MCF 10A (cell line): ENCODE measurements at regions of chr1 and their contacts with region 1.

Region 1: GRCh38 chr1:40691538-40692428 is at the start of gene NFYC:
- DNase-seq: peak; percentile 100
- H3K4me3 Mint-ChIP-seq: peak within 1 kb of the TSS; percentile 75
- H3K27ac Mint-ChIP-seq: peak within 1 kb of the TSS; percentile 44
- H3K4me1 Mint-ChIP-seq: peaks cover 22% of the 10 kb centered on the region
- H3K27me3 Mint-ChIP-seq: no peaks in the 10 kb centered on the region
- CTCF ChIP-seq: no peak
- total RNA-seq, gene NFYC: 66.4 and 69.6 TPM in 2 replicates

Region 2: GRCh38 chr1:40633931-40634376 is 57.8 kb before region 1 on chr1:
- CTCF ChIA-PET with region 1: interaction called, 3 read pairs
- POLR2A ChIA-PET with region 1: interaction called, 10 read pairs
- intact Hi-C with region 1: no loop called
- DNase-seq: no peak
- H3K4me3 Mint-ChIP-seq: no peak overlapping the region
- H3K27ac Mint-ChIP-seq: no peak overlapping the region
- H3K4me1 Mint-ChIP-seq: peaks cover 5% of the 10 kb centered on the region
- H3K27me3 Mint-ChIP-seq: no peaks in the 10 kb centered on the region
- CTCF ChIP-seq: no peak

Region 3: GRCh38 chr1:40650075-40650474 is 41.7 kb before region 1 on chr1:
- CTCF ChIA-PET with region 1: no interaction called
- POLR2A ChIA-PET with region 1: no interaction called
- intact Hi-C with region 1: no loop called
- DNase-seq: no peak
- H3K4me3 Mint-ChIP-seq: no peak overlapping the region
- H3K27ac Mint-ChIP-seq: no peak overlapping the region
- H3K4me1 Mint-ChIP-seq: peaks cover 6% of the 10 kb centered on the region
- H3K27me3 Mint-ChIP-seq: no peaks in the 10 kb centered on the region
- CTCF ChIP-seq: no peak

Region 4: DNA sequence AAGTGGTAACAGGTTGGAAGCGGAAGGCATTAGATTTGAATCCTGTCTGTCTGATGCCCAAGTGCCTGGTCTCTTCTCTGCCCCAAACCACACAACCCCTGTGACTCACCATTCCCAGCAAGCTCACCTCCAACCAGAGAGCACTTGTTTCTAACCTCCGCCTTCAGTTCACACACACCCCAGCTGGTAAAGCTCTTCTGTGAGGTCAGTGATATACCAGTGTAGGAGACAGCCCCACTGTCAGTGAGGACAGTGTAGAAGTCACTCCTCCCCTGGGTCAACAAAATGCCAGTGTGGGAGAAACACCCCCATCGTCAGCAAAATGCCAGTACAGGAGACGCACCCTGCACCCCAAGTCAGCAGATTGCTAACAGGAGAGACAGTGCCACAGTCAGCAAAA is 28.9 kb before region 1 on chr1:
- CTCF ChIA-PET with region 1: interaction called, 5 read pairs
- POLR2A ChIA-PET with region 1: interaction called, 12 read pairs
- intact Hi-C with region 1: no loop called
- DNase-seq: peak; percentile 68
- H3K4me3 Mint-ChIP-seq: no peak overlapping the region
- H3K27ac Mint-ChIP-seq: peak overlapping the region; percentile 20
- H3K4me1 Mint-ChIP-seq: peaks cover 18% of the 10 kb centered on the region
- H3K27me3 Mint-ChIP-seq: no peaks in the 10 kb centered on the region
- CTCF ChIP-seq: no peak

Region 5: GRCh38 chr1:40709100-40709801 is 17.5 kb after region 1 on chr1:
- CTCF ChIA-PET with region 1: interaction called, 8 read pairs
- POLR2A ChIA-PET with region 1: interaction called, 633 read pairs
- intact Hi-C with region 1: loop called (anchors 2 kb)
- DNase-seq: peak; percentile 97
- H3K4me3 Mint-ChIP-seq: peak overlapping the region; percentile 97
- H3K27ac Mint-ChIP-seq: peak overlapping the region; percentile 90
- H3K4me1 Mint-ChIP-seq: peaks cover 26% of the 10 kb centered on the region
- H3K27me3 Mint-ChIP-seq: no peaks in the 10 kb centered on the region
- CTCF ChIP-seq: no peak

Region 6: GRCh38 chr1:40736085-40736531 is 44.3 kb after region 1 on chr1:
- CTCF ChIA-PET with region 1: interaction called, 3 read pairs
- POLR2A ChIA-PET with region 1: interaction called, 11 read pairs
- intact Hi-C with region 1: no loop called
- DNase-seq: peak; percentile 22
- H3K4me3 Mint-ChIP-seq: no peak overlapping the region
- H3K27ac Mint-ChIP-seq: no peak overlapping the region
- H3K4me1 Mint-ChIP-seq: peaks cover 21% of the 10 kb centered on the region
- H3K27me3 Mint-ChIP-seq: no peaks in the 10 kb centered on the region
- CTCF ChIP-seq: no peak

Region 7: DNA sequence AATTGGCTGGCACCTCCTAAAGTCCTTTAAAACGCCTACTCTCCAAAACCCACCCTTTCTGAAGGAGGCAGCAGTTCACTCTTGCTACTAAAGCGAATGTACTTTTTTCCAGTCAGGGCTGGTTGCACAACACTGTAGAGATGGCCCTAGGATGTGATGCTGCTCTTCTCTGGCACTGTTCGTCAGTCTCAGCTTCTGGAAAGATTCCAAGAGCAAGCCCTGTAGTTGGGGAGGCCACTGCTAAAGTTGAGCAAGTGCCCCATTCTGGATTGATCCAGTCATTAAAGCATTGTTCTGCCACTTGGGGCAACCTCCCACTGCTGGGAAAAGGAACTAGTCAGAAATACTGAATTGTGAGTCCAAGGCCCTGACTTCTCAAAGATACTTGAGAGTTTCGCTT is 63.3 kb after region 1 on chr1:
- CTCF ChIA-PET with region 1: interaction called, 3 read pairs
- POLR2A ChIA-PET with region 1: interaction called, 22 read pairs
- intact Hi-C with region 1: loop called (anchors 5 kb)
- DNase-seq: peak; percentile 96
- H3K4me3 Mint-ChIP-seq: no peak overlapping the region
- H3K27ac Mint-ChIP-seq: peak overlapping the region; percentile 53
- H3K4me1 Mint-ChIP-seq: peaks cover 29% of the 10 kb centered on the region
- H3K27me3 Mint-ChIP-seq: no peaks in the 10 kb centered on the region
- CTCF ChIP-seq: no peak